Activated CD8-positive, alpha-beta memory T cell treated with anti-CD3 and anti-CD28 coated beads, Interleukin-2, amount 10 ng/mL, durations not matched to agents 7 days and 5 days (primary cell): ENCODE measurements at regions of chr1 and their contacts with region 1.

Region 1: GRCh38 chr1:172429331-172430127 is 9.0 kb downstream of the C1orf105 start:
- DNase-seq: peak; percentile 55
- ATAC-seq: peak; percentile 78
- H3K4me3 Mint-ChIP-seq: no peak overlapping the region
- H3K27ac Mint-ChIP-seq: no peak overlapping the region
- H3K4me1 Mint-ChIP-seq: peaks cover 17% of the 10 kb centered on the region
- H3K27me3 Mint-ChIP-seq: no peaks in the 10 kb centered on the region

Region 2: DNA sequence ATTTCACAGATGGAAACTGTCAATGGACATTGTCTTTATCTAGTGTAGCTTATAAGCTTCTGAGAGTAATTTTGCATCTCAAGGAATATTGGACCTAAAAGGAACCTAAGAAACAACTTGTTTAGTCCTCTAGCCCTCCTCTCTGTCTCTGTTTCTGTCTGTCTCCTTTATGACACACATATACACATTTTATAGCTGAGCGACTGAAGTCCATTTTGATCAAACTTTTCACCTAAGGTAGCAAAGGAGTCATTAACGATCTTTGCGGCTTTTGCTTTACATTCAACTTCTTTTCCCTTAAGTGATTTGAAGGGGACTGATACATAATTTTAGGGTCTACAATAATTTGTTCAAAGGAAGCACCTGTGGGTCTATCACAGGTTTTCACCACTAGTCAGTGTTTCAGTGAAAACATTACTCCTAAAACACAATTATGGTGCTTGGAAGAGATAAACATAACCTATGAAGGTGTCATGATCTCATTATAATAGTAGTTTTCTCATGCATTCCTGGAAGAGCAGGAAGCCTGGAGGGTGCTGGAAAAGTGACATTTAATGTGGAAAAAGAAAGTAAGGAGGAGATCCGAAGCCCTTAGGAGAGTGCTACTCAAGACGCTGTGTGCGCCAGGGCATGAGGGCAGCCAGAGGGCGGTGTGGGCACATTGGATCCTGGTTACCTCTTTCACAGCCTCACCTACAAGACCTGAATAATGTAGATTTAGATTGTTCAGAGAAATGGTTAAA is 339.6 kb before region 1 on chr1:
- CTCF ChIA-PET with region 1: interaction called, 10 read pairs
- DNase-seq: peak; percentile 75
- ATAC-seq: peak; percentile 82
- H3K4me3 Mint-ChIP-seq: no peak overlapping the region
- H3K27ac Mint-ChIP-seq: no peak overlapping the region
- H3K4me1 Mint-ChIP-seq: peaks cover 3% of the 10 kb centered on the region
- H3K27me3 Mint-ChIP-seq: no peaks in the 10 kb centered on the region

Region 3: DNA sequence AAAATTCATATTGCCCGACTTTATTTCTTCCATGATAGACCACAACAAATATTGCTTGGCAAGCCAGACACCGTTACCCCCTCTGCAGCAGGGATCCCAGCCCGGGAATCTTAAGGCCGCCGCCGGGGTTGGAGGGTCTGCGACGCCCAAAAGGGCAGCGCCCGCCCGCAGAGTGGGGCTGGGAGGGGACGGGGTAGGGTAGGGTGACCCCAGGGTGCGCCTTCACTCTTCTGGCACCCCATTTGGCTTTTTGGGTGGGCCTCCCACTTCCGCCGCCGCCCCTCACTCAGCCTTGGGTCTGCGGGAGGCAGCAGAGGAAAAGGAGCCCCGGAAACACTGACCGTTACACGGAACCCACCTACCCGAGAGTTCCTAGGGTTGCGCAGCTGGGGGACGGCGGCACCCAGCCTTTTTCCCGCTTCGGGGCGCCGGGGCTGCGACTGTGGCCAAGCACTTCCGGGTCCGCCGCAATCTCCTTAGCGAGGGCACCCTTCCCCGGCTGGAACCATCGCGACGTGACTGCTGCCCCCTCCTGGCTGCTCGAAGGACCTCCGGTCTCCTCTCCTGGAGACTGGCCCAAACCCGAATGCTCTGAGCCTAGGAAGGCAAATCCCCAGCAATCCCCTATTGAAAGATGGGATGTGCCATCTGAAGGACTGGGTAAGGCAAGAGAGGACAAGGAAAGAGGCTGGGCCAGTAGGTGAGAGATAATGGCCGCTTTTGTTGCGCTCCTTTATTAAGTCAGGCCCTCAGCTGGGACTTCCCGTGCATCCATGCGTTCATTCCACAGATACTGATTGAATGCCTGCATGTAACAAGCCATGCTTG is 14.3 kb after region 1 on chr1 and contains the start of gene PIGC:
- CTCF ChIA-PET with region 1: interaction called, 18 read pairs
- DNase-seq: peak; percentile 95
- ATAC-seq: peak; percentile 100
- H3K4me3 Mint-ChIP-seq: peak within 1 kb of the TSS; percentile 82
- H3K27ac Mint-ChIP-seq: peak within 1 kb of the TSS; percentile 82
- H3K4me1 Mint-ChIP-seq: peaks cover 27% of the 10 kb centered on the region
- H3K27me3 Mint-ChIP-seq: no peaks in the 10 kb centered on the region
- total RNA-seq, gene PIGC: 20.9 to 23.8 TPM